ENCODE measurements at regions of chr7 and their contacts with region 1.

Region 1: GRCh38 chr7:28062197-28062991 is 118.2 kb downstream of the JAZF1 start:
- DNase-seq: peak; percentile 69 to 76
- H3K4me3 ChIP-seq: no peak overlapping the region
- H3K4me3 Mint-ChIP-seq: no peak overlapping the region
- H3K27ac Mint-ChIP-seq: no peak overlapping the region
- H3K4me1 ChIP-seq: no peaks in the 10 kb centered on the region
- H3K4me1 Mint-ChIP-seq: peaks cover 7% of the 10 kb centered on the region
- H3K27me3 ChIP-seq: no peaks in the 10 kb centered on the region
- H3K27me3 Mint-ChIP-seq: peaks cover 8% of the 10 kb centered on the region
- CTCF ChIP-seq: peak; percentile 76 to 86

Region 2: GRCh38 chr7:28078036-28078901 is 15.9 kb after region 1 on chr7:
- CTCF ChIA-PET with region 1: interaction called, 47 read pairs
- POLR2A ChIA-PET with region 1: no interaction called
- intact Hi-C with region 1: loop called (anchors 1 kb)
- DNase-seq: peak in 1 of 2 experiments; percentile 66
- H3K4me3 ChIP-seq: no peak overlapping the region
- H3K4me3 Mint-ChIP-seq: no peak overlapping the region
- H3K27ac Mint-ChIP-seq: no peak overlapping the region
- H3K4me1 ChIP-seq: no peaks in the 10 kb centered on the region
- H3K4me1 Mint-ChIP-seq: no peaks in the 10 kb centered on the region
- H3K27me3 ChIP-seq: no peaks in the 10 kb centered on the region
- H3K27me3 Mint-ChIP-seq: peaks cover 20% of the 10 kb centered on the region
- CTCF ChIP-seq: peak; percentile 90 to 95

Measured in Caco-2 (cell line).